ENCODE measurements at regions of chr3 and their contacts with region 1.

Region 1: GRCh38 chr3:118628704-118629341 is 405.8 kb downstream of the IGSF11 start:
- DNase-seq: peak; percentile 71
- H3K4me3 Mint-ChIP-seq: no peak overlapping the region
- H3K27ac Mint-ChIP-seq: no peak overlapping the region
- H3K4me1 Mint-ChIP-seq: no peaks in the 10 kb centered on the region
- H3K27me3 Mint-ChIP-seq: no peaks in the 10 kb centered on the region
- CTCF ChIP-seq: peak; percentile 68

Region 2: GRCh38 chr3:118348169-118348557 is 280.7 kb before region 1 on chr3:
- CTCF ChIA-PET with region 1: no interaction called
- intact Hi-C with region 1: no loop called
- DNase-seq: no peak
- H3K4me3 Mint-ChIP-seq: no peak overlapping the region
- H3K27ac Mint-ChIP-seq: no peak overlapping the region
- H3K4me1 Mint-ChIP-seq: no peaks in the 10 kb centered on the region
- H3K27me3 Mint-ChIP-seq: no peaks in the 10 kb centered on the region
- CTCF ChIP-seq: no peak

Region 3: GRCh38 chr3:118380576-118380975 is 248.2 kb before region 1 on chr3:
- CTCF ChIA-PET with region 1: no interaction called
- intact Hi-C with region 1: loop called (anchors 5 kb)
- DNase-seq: no peak
- H3K4me3 Mint-ChIP-seq: no peak overlapping the region
- H3K27ac Mint-ChIP-seq: no peak overlapping the region
- H3K4me1 Mint-ChIP-seq: no peaks in the 10 kb centered on the region
- H3K27me3 Mint-ChIP-seq: no peaks in the 10 kb centered on the region
- CTCF ChIP-seq: no peak

Region 4: GRCh38 chr3:118472588-118472987 is 156.2 kb before region 1 on chr3:
- CTCF ChIA-PET with region 1: no interaction called
- intact Hi-C with region 1: loop called (anchors 10 kb)
- DNase-seq: no peak
- H3K4me3 Mint-ChIP-seq: no peak overlapping the region
- H3K27ac Mint-ChIP-seq: no peak overlapping the region
- H3K4me1 Mint-ChIP-seq: no peaks in the 10 kb centered on the region
- H3K27me3 Mint-ChIP-seq: no peaks in the 10 kb centered on the region
- CTCF ChIP-seq: no peak

Region 5: GRCh38 chr3:118817748-118818165 is 188.9 kb after region 1 on chr3:
- CTCF ChIA-PET with region 1: no interaction called
- intact Hi-C with region 1: loop called (anchors 5 kb)
- DNase-seq: peak; percentile 54
- H3K4me3 Mint-ChIP-seq: no peak overlapping the region
- H3K27ac Mint-ChIP-seq: no peak overlapping the region
- H3K4me1 Mint-ChIP-seq: no peaks in the 10 kb centered on the region
- H3K27me3 Mint-ChIP-seq: no peaks in the 10 kb centered on the region
- CTCF ChIP-seq: peak; percentile 73

Measured in Calu3 (cell line).